Esophagus squamous epithelium (tissue), 5 donors: ENCODE measurements at regions of chr19 and their contacts with region 1.

Region 1: DNA sequence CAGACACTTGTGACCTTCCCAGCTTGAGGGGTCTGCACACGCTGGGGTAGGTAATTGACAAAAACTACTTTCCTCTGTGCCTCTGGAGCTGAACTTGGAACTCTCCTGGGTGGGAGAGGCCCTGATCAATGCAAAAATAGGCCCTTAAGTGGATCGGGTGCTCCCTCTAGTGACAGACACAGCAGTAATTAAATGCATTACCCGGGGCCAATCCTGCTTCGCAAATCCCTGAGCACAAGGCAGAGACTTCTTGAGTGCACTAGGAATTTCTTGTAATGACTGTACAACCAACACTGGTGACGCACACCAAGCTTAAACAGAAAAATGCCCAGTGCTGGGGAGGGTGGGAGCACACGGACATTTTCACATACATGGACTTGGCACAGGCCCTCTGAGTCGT is 10.6 kb upstream of the UBE2S start:
- DNase-seq: no peak
- H3K4me3 ChIP-seq: no peak overlapping the region
- H3K27ac ChIP-seq: no peak overlapping the region
- H3K4me1 ChIP-seq: peaks cover 0 to 4% (median 0%) of the 10 kb centered on the region in 3 donors
- H3K27me3 ChIP-seq: peaks cover 0 to 53% (median 0%) of the 10 kb centered on the region in 4 donors
- CTCF ChIP-seq: peak; percentile 46 to 80 (median 68)
- POLR2A ChIP-seq: no peak

Region 2: GRCh38 chr19:55279770-55280643 is 138.2 kb before region 1 on chr19 and contains the start of gene HSPBP1:
- intact Hi-C with region 1: loop called (anchors 10 kb)
- DNase-seq: peak; percentile 68
- H3K4me3 ChIP-seq: peak within 1 kb of the TSS; percentile 66 to 83 (median 72)
- H3K27ac ChIP-seq: peak within 1 kb of the TSS; percentile 73 to 92 (median 85)
- H3K4me1 ChIP-seq: peaks cover 15 to 49% (median 19%) of the 10 kb centered on the region in 3 donors
- H3K27me3 ChIP-seq: peaks cover 0 to 24% (median 0%) of the 10 kb centered on the region in 4 donors
- CTCF ChIP-seq: no peak
- POLR2A ChIP-seq: peak in 2 of 4 donors; percentile 16 to 27
- total RNA-seq, gene HSPBP1: 27.1 to 40.7 (median 32.4) TPM

Region 3: GRCh38 chr19:55494172-55494761 is 76.1 kb after region 1 on chr19:
- intact Hi-C with region 1: no loop called
- DNase-seq: no peak
- H3K4me3 ChIP-seq: peak overlapping the region in 3 of 4 donors; percentile 15 to 48 (median 22)
- H3K27ac ChIP-seq: peak overlapping the region; percentile 42 to 74 (median 58)
- H3K4me1 ChIP-seq: peaks cover 12 to 47% (median 16%) of the 10 kb centered on the region in 3 donors
- H3K27me3 ChIP-seq: peaks cover 0 to 39% (median 0%) of the 10 kb centered on the region in 4 donors
- CTCF ChIP-seq: no peak
- POLR2A ChIP-seq: no peak